Activated CD4-positive, alpha-beta T cell treated with anti-CD3 and anti-CD28 coated beads for 36 hours (primary cell): ENCODE measurements at regions of chr1 and their contacts with region 1.

Region 1: DNA sequence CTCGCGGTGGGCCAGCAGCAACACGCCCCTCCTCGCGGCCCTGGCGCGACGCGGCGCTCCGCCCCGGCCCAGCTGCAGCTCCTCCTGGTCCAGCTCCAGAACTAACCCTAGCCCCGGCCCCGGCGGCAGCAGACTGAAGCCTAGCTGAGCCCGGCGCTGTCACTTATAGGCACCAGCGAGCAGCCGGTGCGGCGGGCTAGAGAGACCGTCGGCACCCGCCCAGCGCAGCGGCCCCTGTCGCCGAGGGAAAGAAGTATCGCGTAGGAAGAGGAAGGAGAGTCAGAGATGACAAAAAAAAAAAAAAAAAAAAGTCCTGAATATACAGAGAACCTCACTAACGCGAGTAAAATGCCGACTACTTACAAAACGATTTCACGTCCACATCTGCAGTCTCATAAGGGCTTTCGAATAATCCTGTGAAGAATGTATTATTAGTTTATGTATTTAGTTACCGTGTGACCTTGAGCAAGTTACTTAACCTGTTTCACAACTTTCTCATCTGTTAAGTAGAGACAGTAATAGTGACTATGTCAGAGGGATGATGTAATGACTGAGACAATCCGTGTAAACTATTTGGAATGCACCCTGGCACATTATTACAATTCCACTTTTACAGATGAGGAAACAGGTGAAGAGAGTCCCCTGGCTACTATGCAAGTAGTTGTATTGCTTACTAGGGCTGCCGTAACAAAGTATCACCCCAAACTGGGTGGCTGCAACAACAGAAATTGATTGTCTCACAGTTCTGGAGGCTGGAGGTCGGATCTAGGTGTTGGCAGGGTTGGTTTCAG is at the start of gene SLC9A1:
- DNase-seq: peak; percentile 95
- ATAC-seq: peak; percentile 90
- H3K4me3 Mint-ChIP-seq: peak within 1 kb of the TSS; percentile 81
- H3K27ac Mint-ChIP-seq: peak within 1 kb of the TSS; percentile 97
- H3K4me1 Mint-ChIP-seq: peaks cover 42% of the 10 kb centered on the region
- H3K27me3 Mint-ChIP-seq: no peaks in the 10 kb centered on the region
- total RNA-seq, gene SLC9A1: 15.6 to 20.4 TPM

Region 2: GRCh38 chr1:26811057-26811456 is 344.1 kb before region 1 on chr1:
- CTCF ChIA-PET with region 1: no interaction called
- POLR2A ChIA-PET with region 1: no interaction called
- intact Hi-C with region 1: no loop called
- DNase-seq: no peak
- ATAC-seq: no peak
- H3K4me3 Mint-ChIP-seq: no peak overlapping the region
- H3K27ac Mint-ChIP-seq: no peak overlapping the region
- H3K4me1 Mint-ChIP-seq: peaks cover 17% of the 10 kb centered on the region
- H3K27me3 Mint-ChIP-seq: no peaks in the 10 kb centered on the region

Region 3: DNA sequence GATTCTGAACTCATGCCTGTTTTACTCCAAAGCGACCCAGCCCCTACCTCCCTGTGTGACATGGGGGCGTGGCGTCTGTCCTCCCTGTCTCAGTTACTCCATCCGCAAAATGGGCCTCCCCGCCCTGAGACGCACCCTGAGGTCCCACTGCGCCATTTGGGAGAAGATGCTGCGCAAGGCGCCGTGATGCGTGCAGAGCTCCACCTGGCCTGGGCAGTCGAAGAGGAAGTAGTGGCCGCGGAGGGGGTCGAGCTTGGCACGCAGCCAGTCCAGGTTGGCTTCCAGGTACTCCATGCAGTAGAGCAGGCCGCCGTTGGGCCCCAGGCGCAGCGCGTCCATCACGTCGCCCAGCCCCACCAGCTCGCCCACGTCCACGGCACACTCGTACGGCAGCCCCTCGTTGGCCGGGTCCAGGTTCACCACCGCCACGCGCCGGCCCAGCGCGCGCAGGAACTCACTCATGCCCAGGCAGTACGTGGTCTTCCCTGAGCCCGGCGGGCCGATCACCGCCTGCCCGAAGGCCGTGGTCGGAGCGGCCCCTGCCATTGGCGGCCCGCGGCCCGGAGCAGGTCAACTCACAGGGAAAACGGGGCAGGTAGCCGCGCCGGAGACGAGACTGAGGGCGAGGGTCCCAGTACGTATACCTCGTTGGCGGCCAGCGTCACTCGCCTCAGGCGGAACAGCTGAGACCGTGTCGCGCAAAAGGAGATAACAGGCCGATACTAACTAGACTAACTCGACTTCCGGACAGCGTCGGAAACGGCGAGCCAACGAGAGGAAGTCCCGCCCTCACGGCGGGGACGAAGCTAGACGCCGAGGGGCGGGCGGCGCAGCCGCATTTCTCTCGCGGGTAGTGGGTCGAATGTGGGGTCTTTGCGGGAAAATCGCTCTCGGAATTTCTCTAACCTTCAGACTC is 265.4 kb before region 1 on chr1 and contains the start of gene GPN2:
- CTCF ChIA-PET with region 1: no interaction called
- POLR2A ChIA-PET with region 1: no interaction called
- intact Hi-C with region 1: loop called in 1 of 2 experiments (anchors 1 kb)
- DNase-seq: peak; percentile 86
- ATAC-seq: peak; percentile 97
- H3K4me3 Mint-ChIP-seq: peak within 1 kb of the TSS; percentile 92
- H3K27ac Mint-ChIP-seq: peak within 1 kb of the TSS; percentile 91
- H3K4me1 Mint-ChIP-seq: peaks cover 22% of the 10 kb centered on the region
- H3K27me3 Mint-ChIP-seq: no peaks in the 10 kb centered on the region
- total RNA-seq, gene GPN2: 44.3 to 45.6 TPM

Region 4: DNA sequence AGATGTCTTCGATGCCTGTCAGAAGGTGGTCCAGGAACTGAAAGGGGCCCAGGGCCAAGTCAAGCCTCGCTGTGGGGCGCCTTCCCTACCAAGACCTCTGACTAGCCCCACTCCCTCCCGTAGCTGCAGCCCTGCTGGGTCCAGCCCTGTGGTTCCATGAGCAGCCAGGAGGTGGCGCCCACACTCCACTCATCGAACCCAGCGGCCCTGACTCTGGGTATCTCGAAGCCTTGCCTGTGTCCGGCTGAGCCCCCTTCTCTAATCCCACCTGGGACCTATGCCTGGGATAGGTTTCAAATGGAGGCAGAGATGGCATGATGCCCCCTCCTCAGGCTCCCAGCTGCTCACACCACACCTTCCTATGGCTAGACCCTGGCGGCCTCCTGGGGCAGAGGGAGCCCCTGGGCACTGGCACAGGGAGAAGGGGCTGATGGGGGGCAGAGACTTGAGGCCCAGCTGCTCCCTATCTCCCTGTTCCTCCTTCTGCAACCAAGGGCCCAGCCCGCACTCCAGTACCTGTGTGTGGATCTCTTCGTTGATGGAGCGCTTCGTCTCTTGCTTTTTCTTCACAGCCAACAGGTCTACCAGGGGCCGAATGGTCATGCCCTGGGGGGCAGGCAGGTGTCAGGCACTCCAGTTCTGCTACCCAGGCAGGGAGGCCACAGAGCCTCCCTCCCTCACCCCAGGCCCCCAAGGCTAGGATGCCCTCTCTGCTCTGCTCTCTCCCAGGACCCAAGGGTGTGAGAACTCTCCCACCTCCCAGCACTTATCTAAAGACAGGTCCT is 52.3 kb before region 1 on chr1:
- CTCF ChIA-PET with region 1: interaction called, 8 read pairs
- POLR2A ChIA-PET with region 1: interaction called, 4 read pairs
- intact Hi-C with region 1: loop called in 1 of 2 experiments (anchors 2 kb)
- DNase-seq: peak; percentile 89
- ATAC-seq: peak; percentile 75
- H3K4me3 Mint-ChIP-seq: no peak overlapping the region
- H3K27ac Mint-ChIP-seq: no peak overlapping the region
- H3K4me1 Mint-ChIP-seq: peaks cover 23% of the 10 kb centered on the region
- H3K27me3 Mint-ChIP-seq: no peaks in the 10 kb centered on the region

Region 5: GRCh38 chr1:27136998-27137542 is 18.1 kb before region 1 on chr1:
- CTCF ChIA-PET with region 1: interaction called, 11 read pairs
- POLR2A ChIA-PET with region 1: interaction called, 44 read pairs
- intact Hi-C with region 1: loop called in 1 of 2 experiments (anchors 1 kb)
- DNase-seq: peak; percentile 94
- ATAC-seq: peak; percentile 98
- H3K4me3 Mint-ChIP-seq: peak overlapping the region; percentile 73
- H3K27ac Mint-ChIP-seq: peak overlapping the region; percentile 96
- H3K4me1 Mint-ChIP-seq: peaks cover 58% of the 10 kb centered on the region
- H3K27me3 Mint-ChIP-seq: no peaks in the 10 kb centered on the region

Region 6: GRCh38 chr1:27203946-27204345 is 48.8 kb after region 1 on chr1:
- CTCF ChIA-PET with region 1: no interaction called
- POLR2A ChIA-PET with region 1: no interaction called
- intact Hi-C with region 1: no loop called
- DNase-seq: no peak
- ATAC-seq: no peak
- H3K4me3 Mint-ChIP-seq: no peak overlapping the region
- H3K27ac Mint-ChIP-seq: no peak overlapping the region
- H3K4me1 Mint-ChIP-seq: no peaks in the 10 kb centered on the region
- H3K27me3 Mint-ChIP-seq: no peaks in the 10 kb centered on the region

Region 7: DNA sequence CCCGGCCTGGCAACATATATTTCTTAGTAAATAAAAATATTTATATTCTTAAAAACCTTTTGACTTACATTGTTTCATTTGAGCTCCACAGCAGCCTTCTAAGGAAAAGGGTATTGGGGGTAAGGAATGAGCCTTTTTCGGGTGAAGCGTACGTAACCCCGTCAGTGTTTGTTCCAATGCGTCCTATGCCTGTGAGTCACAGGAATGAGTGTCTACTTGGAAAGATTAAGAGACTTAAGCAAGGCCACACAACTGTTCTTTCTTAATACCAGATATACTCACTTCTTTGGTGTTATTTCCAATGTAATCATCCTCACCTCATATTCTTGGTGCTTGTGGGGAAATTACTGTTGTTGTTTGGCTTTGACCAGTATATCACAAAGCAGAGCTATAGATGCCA is 102.0 kb after region 1 on chr1:
- CTCF ChIA-PET with region 1: interaction called, 6 read pairs
- POLR2A ChIA-PET with region 1: no interaction called
- intact Hi-C with region 1: loop called in 1 of 2 experiments (anchors 1 kb)
- DNase-seq: no peak
- ATAC-seq: no peak
- H3K4me3 Mint-ChIP-seq: no peak overlapping the region
- H3K27ac Mint-ChIP-seq: no peak overlapping the region
- H3K4me1 Mint-ChIP-seq: peaks cover 50% of the 10 kb centered on the region
- H3K27me3 Mint-ChIP-seq: no peaks in the 10 kb centered on the region